Gastrocnemius medialis (tissue), 4 donors: ENCODE measurements at regions of chr12 and their contacts with region 1.

Region 1: GRCh38 chr12:96399919-96400797 is at the start of gene CDK17:
- DNase-seq: peak; percentile 71 to 82
- ATAC-seq: peak; percentile 80 to 82
- H3K4me3 ChIP-seq: peak within 1 kb of the TSS; percentile 83 to 97 (median 86)
- H3K27ac ChIP-seq: peak within 1 kb of the TSS; percentile 88 to 98 (median 95)
- H3K4me1 ChIP-seq: peaks cover 31 to 32% of the 10 kb centered on the region in 2 donors
- H3K27me3 ChIP-seq: no peaks in the 10 kb centered on the region
- CTCF ChIP-seq: peak; percentile 9 to 81 (median 59)
- POLR2A ChIP-seq: peak; percentile 78 to 88
- total RNA-seq, gene CDK17: 10.9 to 25.1 (median 20.9) TPM

Region 2: GRCh38 chr12:96035278-96036236 is 364.6 kb before region 1 on chr12 and contains the start of gene LTA4H:
- in situ Hi-C with region 1: loop called in 1 of 4 experiments (anchors 10 kb)
- intact Hi-C with region 1: loop called (anchors 2 kb)
- DNase-seq: peak; percentile 94 to 96
- ATAC-seq: peak; percentile 96 to 98
- H3K4me3 ChIP-seq: peak within 1 kb of the TSS; percentile 69 to 97 (median 89)
- H3K27ac ChIP-seq: peak within 1 kb of the TSS; percentile 80 to 90 (median 84)
- H3K4me1 ChIP-seq: peaks cover 15 to 18% of the 10 kb centered on the region in 2 donors
- H3K27me3 ChIP-seq: no peaks in the 10 kb centered on the region
- CTCF ChIP-seq: no peak
- POLR2A ChIP-seq: peak; percentile 58 to 76
- total RNA-seq, gene LTA4H: 36.7 to 46.9 (median 40.6) TPM

Region 3: DNA sequence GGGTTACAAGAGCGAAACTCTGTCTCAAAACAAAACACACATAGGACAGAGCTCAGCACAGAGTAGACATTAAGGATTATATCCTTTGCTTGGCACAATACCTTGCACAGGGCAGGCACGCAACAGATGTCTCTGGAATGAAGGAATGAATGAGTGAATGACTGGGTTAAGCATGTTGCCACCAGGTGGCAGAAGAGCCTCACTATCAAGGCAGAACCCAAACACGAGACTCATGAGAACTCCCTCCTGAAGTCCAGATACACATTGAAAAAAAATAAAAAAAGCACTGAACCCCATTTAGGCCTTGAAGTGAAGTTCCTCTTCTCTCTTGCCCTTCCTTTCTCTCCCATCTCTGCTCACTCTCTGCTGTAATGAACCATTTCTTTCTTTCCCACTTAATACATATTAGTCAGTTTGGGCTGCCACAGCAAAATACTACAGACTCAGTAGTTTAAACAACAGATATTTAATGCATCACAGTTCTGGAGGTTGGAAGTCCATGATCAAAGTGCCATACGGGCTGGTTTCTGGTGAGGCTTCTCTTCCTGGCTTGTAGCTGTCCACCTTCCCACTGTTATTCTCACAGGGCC is 338.2 kb before region 1 on chr12:
- in situ Hi-C with region 1: loop called in 1 of 4 experiments (anchors 25 kb)
- intact Hi-C with region 1: loop called (anchors 10 kb)
- DNase-seq: peak; percentile 32 to 42
- ATAC-seq: peak; percentile 52 to 62
- H3K4me3 ChIP-seq: no peak overlapping the region
- H3K27ac ChIP-seq: no peak overlapping the region
- H3K4me1 ChIP-seq: no peaks in the 10 kb centered on the region
- H3K27me3 ChIP-seq: no peaks in the 10 kb centered on the region
- CTCF ChIP-seq: peak; percentile 45 to 75 (median 72)
- POLR2A ChIP-seq: no peak

Region 4: DNA sequence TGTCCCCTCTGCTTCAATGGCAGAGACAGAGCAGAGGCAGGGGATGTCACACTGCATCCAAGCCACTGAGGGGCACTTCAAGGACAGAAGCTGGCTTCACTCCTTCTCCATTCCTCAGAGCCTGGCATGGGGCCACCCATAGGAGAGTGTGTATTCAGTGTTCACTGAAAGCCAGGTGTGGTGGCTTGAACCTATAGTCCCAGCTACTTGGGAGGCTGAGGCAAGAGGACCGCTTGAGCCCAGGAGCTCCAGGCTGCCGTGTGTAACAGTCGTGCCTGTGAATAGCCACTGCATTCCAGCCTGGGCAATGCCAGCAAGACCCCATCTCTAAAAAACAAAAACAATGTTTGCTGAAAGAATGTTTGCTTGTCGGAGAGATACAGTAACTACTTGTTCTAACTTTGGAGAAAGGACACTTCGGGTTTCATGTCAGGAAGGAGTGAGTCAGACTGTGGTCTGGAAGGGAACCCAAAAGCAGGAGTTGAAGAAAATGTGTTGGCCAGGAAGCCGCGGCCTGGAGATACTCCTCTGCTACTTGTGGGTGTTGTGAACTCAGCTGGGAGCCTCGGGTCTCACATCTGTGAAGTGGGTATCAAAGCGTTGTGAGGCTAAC is 162.6 kb before region 1 on chr12:
- in situ Hi-C with region 1: no loop called
- intact Hi-C with region 1: loop called (anchors 5 kb)
- DNase-seq: peak; percentile 36 to 54
- ATAC-seq: peak; percentile 47 to 65
- H3K4me3 ChIP-seq: peak overlapping the region in 1 of 4 donors; percentile 6
- H3K27ac ChIP-seq: peak overlapping the region; percentile 43 to 69 (median 64)
- H3K4me1 ChIP-seq: peaks cover 42 to 62% of the 10 kb centered on the region in 2 donors
- H3K27me3 ChIP-seq: peaks cover 9 to 15% (median 13%) of the 10 kb centered on the region in 3 donors
- CTCF ChIP-seq: no peak
- POLR2A ChIP-seq: no peak

Region 5: GRCh38 chr12:96327346-96327745 is 72.8 kb before region 1 on chr12:
- in situ Hi-C with region 1: no loop called
- intact Hi-C with region 1: loop called (anchors 2 kb)
- DNase-seq: no peak
- ATAC-seq: peak in 1 of 2 donors; percentile 45
- H3K4me3 ChIP-seq: no peak overlapping the region
- H3K27ac ChIP-seq: peak overlapping the region; percentile 26 to 63 (median 38)
- H3K4me1 ChIP-seq: peaks cover 24 to 28% of the 10 kb centered on the region in 2 donors
- H3K27me3 ChIP-seq: no peaks in the 10 kb centered on the region
- CTCF ChIP-seq: no peak
- POLR2A ChIP-seq: no peak

Region 6: DNA sequence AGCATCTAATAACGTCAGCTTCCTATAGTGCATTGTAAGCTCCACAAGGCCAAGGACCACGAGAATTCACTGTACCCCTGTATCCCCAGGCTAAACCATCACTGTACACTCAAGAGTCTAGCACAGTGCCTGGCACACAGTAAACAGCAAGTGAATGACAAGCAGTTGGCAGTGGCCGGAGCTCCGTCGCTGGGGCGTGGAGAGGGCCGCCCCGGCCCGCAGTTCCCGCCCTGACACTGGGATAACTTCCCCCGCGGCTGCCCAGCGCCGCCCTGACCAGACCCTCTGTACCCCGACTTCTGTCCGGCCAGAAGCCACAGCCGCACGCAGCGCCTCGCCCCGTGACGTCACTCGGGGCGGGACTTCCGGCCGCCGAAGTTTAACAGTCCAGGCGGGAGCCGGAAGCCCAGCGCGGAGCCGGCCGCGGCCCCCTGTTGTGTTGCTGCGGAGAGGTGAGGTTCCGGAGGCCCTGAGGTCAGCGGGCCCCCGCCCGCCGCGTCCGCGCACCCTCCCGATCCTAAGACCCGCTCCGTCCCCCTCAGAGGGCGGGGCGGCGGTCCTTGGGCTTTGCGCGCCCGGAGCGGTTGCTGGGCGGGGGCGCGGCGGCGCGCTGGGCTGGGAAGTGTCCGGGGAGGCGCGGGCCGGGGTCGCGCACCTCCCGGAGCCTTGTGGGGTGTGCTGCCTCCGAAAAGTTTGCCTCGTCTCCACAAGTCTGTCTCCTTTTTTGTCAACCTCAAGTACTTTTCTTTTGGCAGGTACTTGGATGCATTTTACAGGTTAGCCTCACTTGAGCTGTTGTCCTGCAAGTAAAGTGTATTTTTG is 506.9 kb after region 1 on chr12 and contains the start of gene NEDD1:
- in situ Hi-C with region 1: no loop called
- intact Hi-C with region 1: loop called (anchors 10 kb)
- DNase-seq: peak; percentile 50 to 68
- ATAC-seq: peak; percentile 89 to 90
- H3K4me3 ChIP-seq: peak within 1 kb of the TSS; percentile 92 to 96 (median 94)
- H3K27ac ChIP-seq: peak within 1 kb of the TSS; percentile 85 to 92 (median 87)
- H3K4me1 ChIP-seq: peaks cover 26 to 27% of the 10 kb centered on the region in 2 donors
- H3K27me3 ChIP-seq: no peaks in the 10 kb centered on the region
- CTCF ChIP-seq: no peak
- POLR2A ChIP-seq: peak; percentile 66 to 72
- total RNA-seq, gene NEDD1: 15.1 to 29.4 (median 22.1) TPM